ENCODE measurements at regions of chr6 and their contacts with region 1.

Region 1: DNA sequence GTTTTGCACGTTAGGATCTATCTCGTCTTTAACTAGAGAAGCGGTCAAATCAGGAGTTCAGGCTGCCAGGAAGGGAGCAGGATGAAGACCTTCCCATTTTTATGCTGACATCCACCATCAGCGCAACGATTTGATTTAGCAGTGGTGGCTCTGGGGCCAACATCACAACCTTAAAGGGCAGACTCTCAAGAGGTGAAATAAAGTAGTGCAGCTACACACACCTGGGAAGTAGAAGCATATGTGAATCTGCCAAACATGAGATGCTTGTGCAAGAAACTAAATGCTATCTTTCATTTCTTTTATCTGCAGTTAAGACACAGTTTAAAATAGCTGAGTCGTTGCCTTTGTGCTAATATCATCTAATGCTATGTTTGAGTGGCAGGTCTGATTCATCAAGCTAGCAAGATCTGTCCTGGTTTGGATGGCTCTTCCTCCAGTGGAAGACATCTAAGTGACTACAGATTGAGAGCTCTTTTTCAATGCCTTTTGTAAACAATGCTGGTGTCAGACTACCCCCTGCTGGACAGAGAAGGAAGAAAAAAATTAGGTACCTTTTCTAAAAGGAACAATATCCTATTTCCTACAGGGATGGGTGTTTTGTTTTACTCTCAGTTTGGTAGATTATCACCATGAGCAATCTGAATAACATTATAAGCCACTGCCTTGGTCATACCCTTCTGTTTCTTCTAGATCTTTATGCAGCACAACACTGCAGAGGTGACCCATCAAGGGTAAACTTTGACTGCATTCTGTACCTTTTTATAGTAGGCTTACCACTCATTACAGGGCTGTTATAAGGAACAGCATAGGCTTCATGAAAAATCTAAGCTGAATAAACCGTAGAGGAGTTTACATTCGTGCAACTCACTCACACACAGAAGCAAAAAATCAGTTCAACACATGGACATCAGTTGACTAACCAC is 171.6 kb upstream of the FBXL4 start:
- DNase-seq: peak in 1 of 10 donors; percentile 9
- H3K4me3 ChIP-seq: no peak overlapping the region
- H3K27ac ChIP-seq: no peak overlapping the region
- H3K27me3 ChIP-seq: peaks cover 0 to 4% (median 0%) of the 10 kb centered on the region in 45 donors
- CTCF ChIP-seq: peak; percentile 60 to 96 (median 79)

Region 2: GRCh38 chr6:97186416-97186999 is 1932.9 kb before region 1 on chr6:
- intact Hi-C with region 1: loop called in 1 of 2 experiments (anchors 10 kb)
- DNase-seq: peak; percentile 37 to 88 (median 64)
- H3K4me3 ChIP-seq: no peak overlapping the region
- H3K27ac ChIP-seq: no peak overlapping the region
- H3K27me3 ChIP-seq: no peaks in the 10 kb centered on the region
- CTCF ChIP-seq: peak; percentile 80 to 99 (median 92)

Region 3: DNA sequence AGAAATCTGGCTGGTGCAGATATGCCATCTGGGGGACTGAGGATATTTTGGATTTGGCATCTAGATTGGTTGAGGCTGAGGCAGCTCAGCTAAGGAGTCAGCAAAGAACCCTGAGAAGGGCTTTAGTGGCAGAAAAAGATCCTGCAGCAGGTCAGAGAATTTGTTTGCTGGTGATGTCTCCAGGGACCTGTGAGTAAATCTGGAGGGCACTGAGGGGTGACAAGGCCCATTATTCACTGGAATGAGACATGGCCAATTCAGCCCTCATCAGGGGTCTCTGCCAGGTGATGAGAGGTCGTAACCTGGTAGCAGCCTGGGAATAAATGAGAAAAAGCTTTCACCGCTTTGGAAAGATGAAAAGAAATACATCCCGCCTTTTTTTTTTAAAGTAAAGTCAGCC is 53.3 kb before region 1 on chr6:
- intact Hi-C with region 1: no loop called
- DNase-seq: no peak
- H3K4me3 ChIP-seq: no peak overlapping the region
- H3K27ac ChIP-seq: no peak overlapping the region
- H3K27me3 ChIP-seq: no peaks in the 10 kb centered on the region
- CTCF ChIP-seq: no peak

Measured in dorsolateral prefrontal cortex (tissue), 120 donors.